ENCODE measurements at regions of chr21 and their contacts with region 1.

Region 1: DNA sequence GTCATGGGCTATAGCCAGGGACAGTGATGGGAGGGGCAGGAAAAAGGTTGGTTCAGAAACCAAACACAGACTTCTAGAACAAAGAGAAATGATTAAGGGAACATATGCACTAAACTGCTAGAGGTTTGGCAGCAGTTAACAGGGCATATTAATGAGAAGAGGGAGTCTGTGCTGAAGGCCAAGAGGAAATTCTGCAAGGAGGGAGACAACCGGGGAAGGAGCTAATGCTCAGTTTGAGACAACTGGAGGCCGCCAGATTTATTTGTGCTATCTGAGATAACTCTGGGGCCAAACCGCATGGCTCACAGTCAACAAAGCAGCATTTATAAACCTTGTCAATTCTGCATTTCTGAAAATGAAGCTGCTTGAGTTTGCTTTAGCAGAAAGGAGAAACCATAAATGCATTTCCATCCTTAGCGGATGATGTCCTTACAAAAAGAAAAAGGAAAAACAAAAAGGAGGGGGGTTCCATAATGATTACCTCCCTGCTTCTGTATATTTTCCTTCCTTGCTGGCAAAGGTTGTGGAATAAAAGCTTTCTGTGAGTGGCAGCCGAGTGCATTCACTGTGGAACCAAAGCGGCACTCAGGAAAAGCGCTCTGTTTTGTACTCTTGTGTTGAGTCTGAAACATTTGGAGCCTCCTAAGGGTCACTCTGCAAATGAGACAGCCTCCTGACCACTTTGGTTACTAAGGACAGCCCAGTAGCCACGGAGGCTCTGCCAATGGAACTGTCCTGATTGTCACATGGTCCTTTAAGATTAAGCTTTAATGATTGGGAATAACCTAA is 70.3 kb downstream of the SIM2 start:
- DNase-seq: peak in 1 of 3 donors; percentile 62
- ATAC-seq: peak; percentile 72 to 77
- H3K4me3 ChIP-seq: no peak overlapping the region
- H3K27ac ChIP-seq: no peak overlapping the region
- H3K4me1 ChIP-seq: peaks cover 5% of the 10 kb centered on the region
- H3K27me3 ChIP-seq: no peaks in the 10 kb centered on the region

Region 2: GRCh38 chr21:36917471-36918158 is 148.4 kb after region 1 on chr21:
- intact Hi-C with region 1: loop called in 1 of 4 experiments (anchors 10 kb)
- DNase-seq: no peak
- ATAC-seq: peak; percentile 67 to 76
- H3K4me3 ChIP-seq: no peak overlapping the region
- H3K27ac ChIP-seq: no peak overlapping the region
- H3K4me1 ChIP-seq: no peaks in the 10 kb centered on the region
- H3K27me3 ChIP-seq: no peaks in the 10 kb centered on the region

Region 3: DNA sequence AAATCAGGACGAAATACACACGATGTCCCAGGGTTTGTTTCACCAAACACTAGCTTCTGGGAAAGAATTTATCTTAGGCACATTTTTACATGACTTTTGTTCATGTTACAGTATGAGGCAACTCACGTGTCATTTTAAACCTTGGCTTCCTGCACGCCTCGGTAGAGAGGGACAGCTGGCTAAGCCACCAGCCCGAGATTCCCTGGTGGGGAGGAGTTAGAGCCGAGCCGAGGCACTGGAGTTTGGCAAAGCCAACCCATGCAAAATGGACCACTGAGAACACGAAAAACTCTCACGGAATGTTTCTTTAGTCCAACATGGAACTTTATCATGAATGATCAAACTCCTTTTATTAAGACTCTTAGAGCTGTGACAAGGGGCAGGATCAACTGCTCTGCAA is 837.3 kb after region 1 on chr21:
- intact Hi-C with region 1: no loop called
- DNase-seq: no peak
- ATAC-seq: no peak
- H3K4me3 ChIP-seq: no peak overlapping the region
- H3K27ac ChIP-seq: no peak overlapping the region
- H3K4me1 ChIP-seq: no peaks in the 10 kb centered on the region
- H3K27me3 ChIP-seq: no peaks in the 10 kb centered on the region

Measured in right cardiac atrium (tissue), 5 donors.